ENCODE measurements at regions of chr7 and their contacts with region 1.

Region 1: DNA sequence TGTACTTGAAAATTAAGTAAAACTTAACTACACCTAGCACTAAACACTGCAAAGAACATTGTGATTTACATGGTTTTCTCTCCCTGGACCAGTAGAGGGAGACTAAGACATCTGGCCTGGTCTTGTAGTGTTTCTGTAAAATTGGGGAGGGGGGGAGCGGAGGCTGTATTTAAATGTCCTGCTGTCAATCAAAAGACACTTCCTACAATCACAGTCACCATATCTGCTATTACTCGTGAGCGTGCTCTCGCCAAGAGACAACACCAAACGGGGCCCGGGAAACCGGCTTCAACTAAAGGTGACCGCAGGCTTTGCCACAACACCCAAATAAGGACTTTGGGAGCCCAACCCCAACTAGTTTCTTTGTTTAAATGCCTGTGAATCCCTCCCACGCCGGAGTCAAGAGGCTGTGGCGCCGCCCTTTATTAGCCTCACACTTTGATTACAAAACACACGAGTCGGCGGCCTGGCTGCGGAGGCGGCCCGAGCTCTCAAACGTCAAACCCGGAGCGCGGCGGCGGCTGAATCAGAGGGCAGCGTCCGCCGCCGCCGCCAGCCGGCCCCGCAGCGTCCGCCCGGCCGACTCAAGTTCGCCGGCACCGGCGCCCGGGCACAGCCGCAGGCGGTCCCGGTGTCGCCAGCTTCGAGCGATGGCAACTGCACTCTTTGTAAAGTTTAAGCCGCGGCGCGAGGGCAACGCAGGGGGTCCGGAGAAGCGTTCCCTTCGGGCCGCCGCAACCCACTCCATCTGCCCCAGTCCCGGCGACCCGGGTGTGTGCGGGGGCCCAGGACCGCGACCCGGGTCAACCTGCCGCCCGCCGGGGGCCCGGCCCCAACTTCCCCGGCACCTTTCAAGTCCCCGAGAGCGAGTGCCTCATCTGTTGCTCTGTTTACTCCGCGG is 1.3 kb downstream of the KDM7A start:
- DNase-seq: peak; percentile 96
- ATAC-seq: peak; percentile 74
- H3K4me3 ChIP-seq: peak overlapping the region; percentile 80 to 93 (median 92)
- H3K27ac ChIP-seq: peak overlapping the region; percentile 81
- H3K4me1 ChIP-seq: peaks cover 59% of the 10 kb centered on the region
- H3K27me3 ChIP-seq: no peaks in the 10 kb centered on the region
- CTCF ChIP-seq: peak; percentile 85
- EP300 ChIP-seq: peak in 1 of 2 experiments; percentile 21; a peak in 1 of 4 replicates
- POLR2A ChIP-seq: peak in 1 of 2 experiments; percentile 46; a peak in 3 of 4 replicates
- RAD21 ChIP-seq: peak; percentile 73

Region 2: DNA sequence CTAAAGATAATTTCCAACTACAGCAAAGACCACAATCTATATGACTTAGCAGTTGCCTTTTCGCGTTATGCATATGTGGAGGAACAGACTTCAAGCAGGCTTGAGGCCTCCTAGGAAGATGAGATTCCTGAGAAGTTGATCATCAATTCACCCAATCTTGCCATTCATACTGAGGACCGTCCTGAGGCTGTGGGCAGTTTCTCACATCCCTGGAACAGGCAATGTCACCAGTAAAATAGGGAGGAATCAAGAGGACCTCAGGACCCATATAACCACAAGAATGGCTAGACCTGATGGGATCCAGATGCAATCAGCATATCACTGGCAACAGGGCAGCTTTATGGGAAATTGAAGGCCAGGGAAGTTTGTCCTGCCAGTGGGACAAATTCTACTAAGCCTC is 16.0 kb before region 1 on chr7:
- CTCF ChIA-PET with region 1: no interaction called
- POLR2A ChIA-PET with region 1: no interaction called
- in situ Hi-C with region 1: no loop called
- intact Hi-C with region 1: no loop called
- DNase-seq: no peak
- ATAC-seq: no peak
- H3K4me3 ChIP-seq: no peak overlapping the region
- H3K27ac ChIP-seq: no peak overlapping the region
- H3K4me1 ChIP-seq: peaks cover 66% of the 10 kb centered on the region
- H3K27me3 ChIP-seq: no peaks in the 10 kb centered on the region
- CTCF ChIP-seq: no peak
- EP300 ChIP-seq: no peak
- POLR2A ChIP-seq: no peak
- RAD21 ChIP-seq: no peak

Region 3: GRCh38 chr7:140225562-140226249 is 50.2 kb after region 1 on chr7:
- CTCF ChIA-PET with region 1: no interaction called
- POLR2A ChIA-PET with region 1: interaction called, 128 read pairs
- in situ Hi-C with region 1: loop called (anchors 5 kb)
- intact Hi-C with region 1: loop called (anchors 1 kb)
- DNase-seq: peak; percentile 86
- ATAC-seq: peak; percentile 63
- H3K4me3 ChIP-seq: no peak overlapping the region; a peak in 1 of 6 replicates
- H3K27ac ChIP-seq: peak overlapping the region; percentile 75
- H3K4me1 ChIP-seq: peaks cover 93% of the 10 kb centered on the region
- H3K27me3 ChIP-seq: no peaks in the 10 kb centered on the region
- CTCF ChIP-seq: no peak
- EP300 ChIP-seq: peak in 1 of 2 experiments; percentile 53; a peak in 2 of 4 replicates
- POLR2A ChIP-seq: no peak
- RAD21 ChIP-seq: no peak

Region 4: DNA sequence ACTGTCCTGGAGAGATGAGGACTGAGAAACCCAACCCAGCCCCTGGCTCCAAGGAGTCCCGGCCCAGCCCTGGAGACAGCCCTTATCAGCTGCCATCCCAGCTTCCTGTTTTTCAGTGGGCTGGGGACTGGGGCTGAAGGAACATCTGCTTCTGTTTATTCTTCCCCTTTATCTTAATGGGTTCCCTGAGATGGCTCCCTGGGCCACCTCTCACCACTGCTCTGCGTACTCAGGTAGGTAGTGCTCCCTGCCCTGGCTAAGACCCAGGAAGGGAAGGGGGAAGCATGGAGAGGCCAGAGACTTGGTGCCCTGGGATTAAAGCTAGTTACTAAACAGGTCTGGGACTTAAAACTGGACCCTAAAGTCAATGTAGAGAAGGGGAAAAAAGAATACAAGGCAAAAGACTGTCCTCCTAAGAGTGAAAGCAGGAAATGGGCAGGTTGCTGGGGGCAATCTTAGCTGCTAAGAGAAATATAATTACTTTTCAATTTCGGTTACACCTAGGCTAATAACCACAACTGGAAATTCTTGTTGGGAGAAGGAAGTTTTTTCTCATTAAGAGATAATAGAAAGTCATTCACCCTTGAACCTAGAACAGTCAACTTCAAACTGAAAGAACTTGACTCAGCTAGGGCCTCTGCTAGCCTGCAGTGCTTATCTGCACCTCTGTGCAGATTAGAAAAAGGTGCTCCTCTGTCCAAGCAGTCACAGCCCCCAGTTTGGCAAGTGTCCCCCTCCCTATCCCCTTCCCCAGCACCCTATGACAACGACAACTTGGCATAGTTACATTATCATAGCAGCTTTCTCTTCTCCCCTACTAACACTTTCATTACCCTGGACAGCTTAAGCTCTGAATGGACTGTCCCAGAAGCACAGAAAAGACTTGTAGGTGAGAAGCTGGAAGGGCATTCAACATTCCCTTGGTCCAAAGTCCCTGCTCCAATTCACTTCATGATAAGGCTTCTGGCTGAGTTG is 66.9 kb after region 1 on chr7:
- CTCF ChIA-PET with region 1: no interaction called
- POLR2A ChIA-PET with region 1: interaction called, 14 read pairs
- in situ Hi-C with region 1: no loop called
- intact Hi-C with region 1: no loop called
- DNase-seq: peak; percentile 20
- ATAC-seq: peak; percentile 75
- H3K4me3 ChIP-seq: peak overlapping the region in 2 of 3 experiments; percentile 5 to 32; a peak in 1 of 6 replicates
- H3K27ac ChIP-seq: peak overlapping the region; percentile 49
- H3K4me1 ChIP-seq: peaks cover 84% of the 10 kb centered on the region
- H3K27me3 ChIP-seq: no peaks in the 10 kb centered on the region
- CTCF ChIP-seq: no peak
- EP300 ChIP-seq: no peak
- POLR2A ChIP-seq: no peak
- RAD21 ChIP-seq: no peak

Region 5: DNA sequence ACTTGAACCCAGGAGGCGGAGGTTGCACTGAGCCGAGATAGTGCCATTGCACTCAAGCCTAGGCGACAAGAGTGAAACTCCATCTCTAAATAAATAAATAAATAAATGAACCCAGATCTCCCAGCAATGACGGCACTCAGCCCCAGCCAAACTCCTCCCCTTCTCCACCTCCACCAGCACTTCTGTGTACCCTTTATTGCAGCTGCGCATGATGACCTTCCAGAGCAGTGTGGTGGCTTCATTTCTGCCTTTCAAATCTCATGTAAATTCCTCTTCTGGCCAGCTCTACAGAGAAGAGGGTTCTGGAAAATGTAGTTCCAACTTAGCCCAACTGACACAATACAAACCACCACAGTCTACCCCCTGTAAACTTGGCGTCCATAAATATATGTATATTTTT is 114.3 kb after region 1 on chr7:
- CTCF ChIA-PET with region 1: no interaction called
- POLR2A ChIA-PET with region 1: no interaction called
- in situ Hi-C with region 1: no loop called
- intact Hi-C with region 1: no loop called
- DNase-seq: no peak
- ATAC-seq: no peak
- H3K4me3 ChIP-seq: no peak overlapping the region
- H3K27ac ChIP-seq: no peak overlapping the region
- H3K4me1 ChIP-seq: peaks cover 15% of the 10 kb centered on the region
- H3K27me3 ChIP-seq: peaks cover 0 to 7% of the 10 kb centered on the region in 2 experiments; a peak in 2 of 5 replicates
- CTCF ChIP-seq: no peak
- EP300 ChIP-seq: no peak
- POLR2A ChIP-seq: no peak
- RAD21 ChIP-seq: no peak

Region 6: GRCh38 chr7:140304191-140304799 is 128.8 kb after region 1 on chr7:
- CTCF ChIA-PET with region 1: interaction called, 8 read pairs
- POLR2A ChIA-PET with region 1: interaction called, 11 read pairs
- in situ Hi-C with region 1: loop called (anchors 10 kb)
- intact Hi-C with region 1: loop called (anchors 1 kb)
- DNase-seq: peak; percentile 53
- ATAC-seq: peak; percentile 82
- H3K4me3 ChIP-seq: peak overlapping the region in 1 of 3 experiments; percentile 17; a peak in 1 of 6 replicates
- H3K27ac ChIP-seq: no peak overlapping the region
- H3K4me1 ChIP-seq: peaks cover 83% of the 10 kb centered on the region
- H3K27me3 ChIP-seq: no peaks in the 10 kb centered on the region
- CTCF ChIP-seq: peak; percentile 72
- EP300 ChIP-seq: no peak
- POLR2A ChIP-seq: no peak
- RAD21 ChIP-seq: peak; percentile 73